Left lung (tissue), 14 donors: ENCODE measurements at regions of chr12 and their contacts with region 1.

Region 1: DNA sequence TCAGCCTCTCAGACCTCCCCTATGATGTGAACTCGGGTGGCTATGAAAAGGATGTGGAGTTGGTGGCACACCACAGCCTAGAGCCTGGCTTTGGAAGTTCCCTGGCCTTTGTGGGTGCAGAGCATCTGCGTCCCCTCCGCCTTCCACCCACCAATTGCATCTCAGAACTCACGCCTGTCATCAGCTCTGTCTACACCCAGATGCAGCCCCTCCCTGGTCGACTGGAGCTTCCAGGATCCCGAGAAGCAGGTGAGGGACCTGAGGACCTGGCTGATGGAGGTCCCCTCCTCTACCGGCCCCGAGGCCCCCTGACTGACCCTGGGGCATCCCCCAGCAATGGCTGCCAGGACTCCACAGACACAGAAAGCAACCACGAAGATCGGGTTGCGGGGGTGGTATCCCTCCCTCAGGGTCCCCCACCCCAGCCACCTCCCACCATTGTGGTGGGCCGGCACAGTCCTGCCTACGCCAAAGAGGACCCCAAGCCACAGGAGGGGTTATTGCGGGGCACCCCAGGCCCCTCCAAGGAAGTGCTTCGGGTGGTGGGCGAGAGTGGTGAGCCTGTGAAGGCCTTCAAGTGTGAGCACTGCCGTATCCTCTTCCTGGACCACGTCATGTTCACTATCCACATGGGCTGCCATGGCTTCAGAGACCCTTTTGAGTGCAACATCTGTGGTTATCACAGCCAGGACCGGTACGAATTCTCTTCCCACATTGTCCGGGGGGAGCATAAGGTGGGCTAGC is 7.0 kb upstream of the RPS26 start:
- DNase-seq: no peak
- ATAC-seq: no peak
- H3K4me3 ChIP-seq: no peak overlapping the region
- H3K27ac ChIP-seq: no peak overlapping the region
- H3K4me1 ChIP-seq: no peaks in the 10 kb centered on the region
- H3K27me3 ChIP-seq: no peaks in the 10 kb centered on the region
- CTCF ChIP-seq: no peak

Region 2: DNA sequence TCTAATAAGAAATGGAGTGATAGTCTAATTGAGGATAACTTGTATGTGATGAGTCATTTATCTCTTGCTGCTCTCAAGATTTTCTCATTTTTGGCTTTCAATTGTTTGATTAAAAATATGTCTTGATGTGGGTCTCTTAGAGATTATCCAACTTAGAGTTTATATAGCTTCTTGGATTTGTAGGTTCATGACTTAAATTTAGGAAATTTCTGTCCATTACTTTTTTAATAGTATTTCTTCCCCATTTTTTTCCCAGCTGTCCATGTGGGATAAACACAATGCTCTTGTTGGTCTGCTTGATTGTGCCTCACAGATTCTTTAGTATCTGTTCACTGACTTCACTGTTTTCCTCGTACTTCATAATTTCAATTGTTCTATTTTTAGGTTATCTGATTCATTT is 626.9 kb before region 1 on chr12:
- intact Hi-C with region 1: no loop called
- DNase-seq: no peak
- ATAC-seq: no peak
- H3K4me3 ChIP-seq: no peak overlapping the region
- H3K27ac ChIP-seq: no peak overlapping the region
- H3K4me1 ChIP-seq: no peaks in the 10 kb centered on the region
- H3K27me3 ChIP-seq: no peaks in the 10 kb centered on the region
- CTCF ChIP-seq: no peak

Region 3: GRCh38 chr12:55862286-55862685 is 172.5 kb before region 1 on chr12:
- intact Hi-C with region 1: no loop called
- DNase-seq: no peak
- ATAC-seq: no peak
- H3K4me3 ChIP-seq: no peak overlapping the region
- H3K27ac ChIP-seq: no peak overlapping the region
- H3K4me1 ChIP-seq: no peaks in the 10 kb centered on the region
- H3K27me3 ChIP-seq: no peaks in the 10 kb centered on the region
- CTCF ChIP-seq: no peak

Region 4: GRCh38 chr12:55993230-55993853 is 41.4 kb before region 1 on chr12:
- intact Hi-C with region 1: loop called in 1 of 2 experiments (anchors 5 kb)
- DNase-seq: no peak
- ATAC-seq: no peak
- H3K4me3 ChIP-seq: no peak overlapping the region
- H3K27ac ChIP-seq: no peak overlapping the region
- H3K4me1 ChIP-seq: peaks cover 3 to 21% of the 10 kb centered on the region in 2 donors
- H3K27me3 ChIP-seq: no peaks in the 10 kb centered on the region
- CTCF ChIP-seq: no peak

Region 5: DNA sequence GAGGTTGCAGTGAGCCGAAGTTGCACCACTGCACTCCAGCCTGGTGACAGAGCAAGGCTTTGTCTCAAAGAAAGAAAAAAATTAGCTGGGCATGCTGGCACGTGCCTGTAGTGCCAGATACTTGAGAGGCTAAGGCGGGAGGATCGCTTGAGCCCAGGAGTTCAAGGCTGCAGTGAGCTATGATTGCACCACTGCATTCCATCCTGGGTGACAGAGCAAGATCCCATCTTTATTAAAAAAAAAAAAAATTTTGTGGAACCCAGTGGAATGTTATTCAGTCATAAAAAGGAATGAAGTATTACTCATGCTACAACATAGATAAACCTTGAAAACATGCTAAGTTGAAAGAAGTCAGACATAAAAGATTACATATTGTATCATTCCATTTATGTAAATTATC is 36.9 kb after region 1 on chr12:
- intact Hi-C with region 1: no loop called
- DNase-seq: no peak
- ATAC-seq: no peak
- H3K4me3 ChIP-seq: no peak overlapping the region
- H3K27ac ChIP-seq: no peak overlapping the region
- H3K4me1 ChIP-seq: no peaks in the 10 kb centered on the region
- H3K27me3 ChIP-seq: no peaks in the 10 kb centered on the region
- CTCF ChIP-seq: no peak